Mammary epithelial cell (primary cell): ENCODE measurements at regions of chr13 and their contacts with region 1.

Region 1: GRCh38 chr13:114065141-114065925 is 67.1 kb downstream of the RASA3 start:
- DNase-seq: peak; percentile 98
- H3K4me3 ChIP-seq: peak overlapping the region in 1 of 3 experiments; percentile 40
- H3K27ac ChIP-seq: peak overlapping the region; percentile 83
- H3K4me1 ChIP-seq: peaks cover 37% of the 10 kb centered on the region
- H3K27me3 ChIP-seq: no peaks in the 10 kb centered on the region
- CTCF ChIP-seq: no peak

Region 2: DNA sequence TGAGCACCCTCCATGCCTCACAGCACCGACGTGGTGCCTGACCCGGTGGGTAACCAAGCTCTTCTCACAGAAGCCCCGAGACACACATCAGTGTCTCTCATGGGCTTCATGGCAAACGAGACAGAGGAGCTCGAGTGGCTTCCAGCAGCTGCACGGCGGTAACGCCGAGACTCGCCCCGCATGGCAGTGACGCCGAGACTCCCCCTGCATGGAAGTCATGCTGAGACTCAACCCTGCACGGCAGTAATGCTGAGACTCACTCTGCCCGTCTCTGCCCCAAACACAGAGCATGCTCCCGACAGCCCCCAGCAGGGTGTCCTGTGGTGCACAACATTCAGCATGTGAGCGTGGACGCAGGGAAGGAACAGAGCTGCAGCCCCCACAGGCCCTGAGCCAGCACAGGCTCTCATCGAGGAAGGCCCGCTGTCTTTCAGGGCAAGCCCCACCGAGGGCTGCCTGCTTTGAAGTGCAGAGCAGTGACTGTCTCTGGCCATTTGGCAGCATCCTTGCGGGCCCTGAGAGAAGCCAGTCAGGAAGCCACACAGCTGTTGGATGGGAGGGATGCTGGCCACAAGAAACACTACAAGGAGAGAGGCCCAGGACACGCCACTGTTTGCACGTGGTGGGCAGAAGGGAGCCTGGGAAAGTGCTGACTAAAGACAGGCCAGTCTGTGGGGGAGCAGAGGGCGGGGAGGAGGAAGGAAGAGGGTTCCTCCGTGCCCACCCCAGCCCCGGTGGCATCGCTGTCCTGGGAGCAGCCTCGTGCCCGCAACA is 210.9 kb before region 1 on chr13:
- CTCF ChIA-PET with region 1: no interaction called
- dilution Hi-C with region 1: no loop called
- in situ Hi-C with region 1: no loop called
- intact Hi-C with region 1: no loop called
- DNase-seq: no peak
- H3K4me3 ChIP-seq: no peak overlapping the region
- H3K27ac ChIP-seq: no peak overlapping the region
- H3K4me1 ChIP-seq: peaks cover 47% of the 10 kb centered on the region
- H3K27me3 ChIP-seq: no peaks in the 10 kb centered on the region
- CTCF ChIP-seq: no peak

Region 3: GRCh38 chr13:114078461-114079451 is 13.4 kb after region 1 on chr13:
- CTCF ChIA-PET with region 1: interaction called, 16 read pairs
- dilution Hi-C with region 1: no loop called
- in situ Hi-C with region 1: no loop called
- intact Hi-C with region 1: no loop called
- DNase-seq: peak; percentile 77
- H3K4me3 ChIP-seq: no peak overlapping the region
- H3K27ac ChIP-seq: no peak overlapping the region
- H3K4me1 ChIP-seq: peaks cover 6% of the 10 kb centered on the region
- H3K27me3 ChIP-seq: peaks cover 2% of the 10 kb centered on the region
- CTCF ChIP-seq: no peak

Region 4: GRCh38 chr13:114132419-114133121 is 67.2 kb after region 1 on chr13 and contains the start of gene RASA3:
- CTCF ChIA-PET with region 1: no interaction called
- dilution Hi-C with region 1: no loop called
- in situ Hi-C with region 1: no loop called
- intact Hi-C with region 1: loop called (anchors 1 kb)
- DNase-seq: peak; percentile 71
- H3K4me3 ChIP-seq: peak within 1 kb of the TSS; percentile 33 to 64 (median 50)
- H3K27ac ChIP-seq: no peak within 1 kb of the TSS
- H3K4me1 ChIP-seq: peaks cover 16% of the 10 kb centered on the region
- H3K27me3 ChIP-seq: no peaks in the 10 kb centered on the region
- CTCF ChIP-seq: no peak
- total RNA-seq, gene RASA3: 5.2 to 8.4 TPM

Region 5: GRCh38 chr13:114339857-114340534 is 274.7 kb after region 1 on chr13:
- CTCF ChIA-PET with region 1: interaction called, 27 read pairs
- dilution Hi-C with region 1: no loop called
- in situ Hi-C with region 1: no loop called
- intact Hi-C with region 1: no loop called
- DNase-seq: peak; percentile 33
- H3K4me3 ChIP-seq: no peak overlapping the region
- H3K27ac ChIP-seq: no peak overlapping the region
- H3K4me1 ChIP-seq: no peaks in the 10 kb centered on the region
- H3K27me3 ChIP-seq: no peaks in the 10 kb centered on the region
- CTCF ChIP-seq: peak; percentile 72 to 73